ENCODE measurements at regions of chr19 and their contacts with region 1.

Region 1: GRCh38 chr19:35509861-35510625 is 3.4 kb downstream of the DMKN start:
- DNase-seq: peak; percentile 83
- ATAC-seq: peak; percentile 80
- H3K4me3 Mint-ChIP-seq: peak overlapping the region; percentile 45
- H3K27ac Mint-ChIP-seq: no peak overlapping the region
- H3K4me1 Mint-ChIP-seq: peaks cover 14% of the 10 kb centered on the region
- H3K27me3 Mint-ChIP-seq: peaks cover 35% of the 10 kb centered on the region
- CTCF ChIP-seq: peak; percentile 97

Region 2: DNA sequence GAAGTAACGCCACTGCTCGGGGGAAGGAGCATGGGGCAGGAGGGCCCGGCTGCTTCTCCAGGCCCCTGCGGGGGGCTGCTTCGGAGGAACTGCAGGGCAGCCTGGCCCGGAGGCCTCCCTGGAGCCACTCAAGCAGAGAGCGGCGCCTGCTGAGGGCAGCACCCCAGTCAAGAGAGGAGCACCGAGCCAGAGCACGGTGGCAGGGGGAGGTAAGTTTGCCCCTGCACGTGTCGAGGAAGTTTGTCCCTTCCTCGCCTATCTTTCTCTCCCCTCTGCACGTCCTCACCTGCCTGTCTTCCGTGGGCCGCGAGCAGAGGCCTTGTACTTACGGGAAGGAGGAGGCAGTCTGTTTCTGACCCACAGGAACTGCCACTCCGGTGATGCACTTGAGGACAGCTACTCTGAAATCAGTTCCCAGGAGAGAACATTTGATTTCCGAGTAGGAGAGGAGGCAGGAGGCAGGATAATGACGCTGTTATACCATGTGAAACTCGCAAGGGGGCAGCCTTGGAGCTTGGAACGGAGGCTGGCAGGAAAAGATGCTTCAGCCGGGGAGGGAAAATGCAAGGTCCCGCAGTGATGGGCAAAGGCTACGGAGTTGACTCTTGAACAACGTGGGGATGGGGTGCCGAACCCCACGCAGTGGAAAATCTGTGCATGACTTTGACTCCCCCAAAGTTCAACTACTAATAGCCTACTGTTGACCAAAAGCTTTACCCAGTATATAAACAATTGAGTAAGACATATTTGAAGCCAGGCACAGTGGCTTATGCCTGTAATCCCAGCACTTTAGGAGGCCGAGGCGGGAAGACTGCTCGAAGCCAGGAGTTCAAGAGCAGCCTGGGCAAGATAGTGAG is 157.4 kb before region 1 on chr19:
- CTCF ChIA-PET with region 1: interaction called, 11 read pairs
- POLR2A ChIA-PET with region 1: no interaction called
- intact Hi-C with region 1: no loop called
- DNase-seq: peak; percentile 82
- ATAC-seq: peak; percentile 87
- H3K4me3 Mint-ChIP-seq: no peak overlapping the region
- H3K27ac Mint-ChIP-seq: no peak overlapping the region
- H3K4me1 Mint-ChIP-seq: peaks cover 16% of the 10 kb centered on the region
- H3K27me3 Mint-ChIP-seq: peaks cover 2% of the 10 kb centered on the region
- CTCF ChIP-seq: peak; percentile 95

Region 3: GRCh38 chr19:35395382-35396199 is 114.5 kb before region 1 on chr19:
- CTCF ChIA-PET with region 1: no interaction called
- POLR2A ChIA-PET with region 1: no interaction called
- intact Hi-C with region 1: no loop called
- DNase-seq: no peak
- ATAC-seq: no peak
- H3K4me3 Mint-ChIP-seq: no peak overlapping the region
- H3K27ac Mint-ChIP-seq: no peak overlapping the region
- H3K4me1 Mint-ChIP-seq: no peaks in the 10 kb centered on the region
- H3K27me3 Mint-ChIP-seq: peaks cover 2% of the 10 kb centered on the region
- CTCF ChIP-seq: no peak

Region 4: DNA sequence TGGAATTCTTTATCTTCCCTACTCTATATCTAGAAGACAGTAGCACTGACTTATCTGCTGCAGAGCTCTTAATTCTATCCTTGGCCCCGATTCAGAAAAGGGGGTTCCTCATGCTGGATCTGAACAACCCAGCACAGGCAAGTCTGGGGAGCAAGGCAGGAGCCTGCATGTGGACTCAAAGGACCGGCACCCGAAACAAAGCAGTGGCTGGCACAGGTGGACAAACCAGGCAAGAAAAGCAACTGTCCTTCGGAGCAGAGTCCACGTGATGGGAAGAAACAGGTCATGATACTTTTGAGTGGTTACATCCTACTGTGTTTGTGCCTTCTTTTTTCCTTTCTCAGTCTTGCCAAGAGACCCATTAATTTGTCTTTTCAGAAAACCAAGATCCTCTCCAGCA is 100.9 kb before region 1 on chr19:
- CTCF ChIA-PET with region 1: no interaction called
- POLR2A ChIA-PET with region 1: no interaction called
- intact Hi-C with region 1: no loop called
- DNase-seq: no peak
- ATAC-seq: no peak
- H3K4me3 Mint-ChIP-seq: no peak overlapping the region
- H3K27ac Mint-ChIP-seq: no peak overlapping the region
- H3K4me1 Mint-ChIP-seq: peaks cover 7% of the 10 kb centered on the region
- H3K27me3 Mint-ChIP-seq: peaks cover 8% of the 10 kb centered on the region
- CTCF ChIP-seq: no peak

Region 5: GRCh38 chr19:35484252-35485036 is 25.6 kb before region 1 on chr19:
- CTCF ChIA-PET with region 1: interaction called, 10 read pairs
- POLR2A ChIA-PET with region 1: no interaction called
- intact Hi-C with region 1: no loop called
- DNase-seq: peak; percentile 24
- ATAC-seq: peak; percentile 79
- H3K4me3 Mint-ChIP-seq: no peak overlapping the region
- H3K27ac Mint-ChIP-seq: no peak overlapping the region
- H3K4me1 Mint-ChIP-seq: peaks cover 10% of the 10 kb centered on the region
- H3K27me3 Mint-ChIP-seq: peaks cover 6% of the 10 kb centered on the region
- CTCF ChIP-seq: no peak

Region 6: GRCh38 chr19:35549174-35549788 is 39.2 kb after region 1 on chr19:
- CTCF ChIA-PET with region 1: interaction called, 27 read pairs
- POLR2A ChIA-PET with region 1: no interaction called
- intact Hi-C with region 1: no loop called
- DNase-seq: peak; percentile 67
- ATAC-seq: no peak
- H3K4me3 Mint-ChIP-seq: no peak overlapping the region
- H3K27ac Mint-ChIP-seq: no peak overlapping the region
- H3K4me1 Mint-ChIP-seq: peaks cover 33% of the 10 kb centered on the region
- H3K27me3 Mint-ChIP-seq: no peaks in the 10 kb centered on the region
- CTCF ChIP-seq: peak; percentile 86

Region 7: DNA sequence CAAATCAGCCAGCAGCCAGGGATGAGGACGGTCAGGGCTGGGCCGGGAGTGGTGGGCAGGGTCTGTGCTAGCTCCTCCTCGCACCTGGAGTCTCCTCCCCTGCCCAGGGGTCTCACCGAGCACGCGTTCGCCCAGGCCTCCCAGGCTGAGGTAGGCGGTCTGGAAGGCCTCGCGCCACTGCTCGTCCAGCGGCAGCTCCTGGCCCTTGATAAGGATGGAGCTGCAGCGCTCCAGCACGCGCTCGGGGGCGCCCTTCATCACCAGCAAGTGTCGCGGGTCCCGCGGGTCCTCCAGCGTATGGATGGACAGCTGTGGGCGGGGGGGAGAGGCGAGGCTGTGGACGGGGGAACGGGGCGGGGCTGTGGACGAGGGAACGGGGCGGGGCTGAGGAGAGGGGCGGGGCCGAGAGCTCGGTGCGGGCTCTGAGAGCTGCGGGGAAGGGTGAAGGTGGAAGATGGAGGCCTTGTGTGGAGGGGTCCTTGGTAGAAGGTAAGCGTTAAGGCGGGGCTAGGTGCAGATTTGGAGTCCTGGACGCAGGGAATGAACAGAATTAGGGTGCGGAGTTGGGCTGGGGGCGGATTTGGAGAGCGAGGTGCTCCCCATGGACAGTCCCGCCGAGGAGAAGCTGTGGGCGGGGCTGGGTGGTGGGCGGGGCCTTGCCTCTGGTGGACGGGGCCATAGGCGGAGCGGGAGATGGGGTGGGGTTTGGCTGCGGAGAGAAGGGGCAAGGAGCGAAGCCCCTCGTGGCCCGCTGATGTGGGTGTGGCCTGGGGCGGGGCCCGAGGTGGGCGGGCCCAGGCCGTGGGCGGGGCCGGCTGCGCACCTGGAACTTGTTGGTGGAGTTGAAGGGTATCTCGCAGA is 47.7 kb after region 1 on chr19:
- CTCF ChIA-PET with region 1: interaction called, 10 read pairs
- POLR2A ChIA-PET with region 1: no interaction called
- intact Hi-C with region 1: no loop called
- DNase-seq: peak; percentile 71
- ATAC-seq: peak; percentile 74
- H3K4me3 Mint-ChIP-seq: peak overlapping the region; percentile 67
- H3K27ac Mint-ChIP-seq: no peak overlapping the region
- H3K4me1 Mint-ChIP-seq: peaks cover 8% of the 10 kb centered on the region
- H3K27me3 Mint-ChIP-seq: peaks cover 44% of the 10 kb centered on the region
- CTCF ChIP-seq: no peak

Region 8: GRCh38 chr19:35571406-35571967 is 61.4 kb after region 1 on chr19:
- CTCF ChIA-PET with region 1: no interaction called
- POLR2A ChIA-PET with region 1: no interaction called
- intact Hi-C with region 1: no loop called
- DNase-seq: no peak
- ATAC-seq: no peak
- H3K4me3 Mint-ChIP-seq: no peak overlapping the region
- H3K27ac Mint-ChIP-seq: no peak overlapping the region
- H3K4me1 Mint-ChIP-seq: no peaks in the 10 kb centered on the region
- H3K27me3 Mint-ChIP-seq: peaks cover 15% of the 10 kb centered on the region
- CTCF ChIP-seq: no peak

Region 9: DNA sequence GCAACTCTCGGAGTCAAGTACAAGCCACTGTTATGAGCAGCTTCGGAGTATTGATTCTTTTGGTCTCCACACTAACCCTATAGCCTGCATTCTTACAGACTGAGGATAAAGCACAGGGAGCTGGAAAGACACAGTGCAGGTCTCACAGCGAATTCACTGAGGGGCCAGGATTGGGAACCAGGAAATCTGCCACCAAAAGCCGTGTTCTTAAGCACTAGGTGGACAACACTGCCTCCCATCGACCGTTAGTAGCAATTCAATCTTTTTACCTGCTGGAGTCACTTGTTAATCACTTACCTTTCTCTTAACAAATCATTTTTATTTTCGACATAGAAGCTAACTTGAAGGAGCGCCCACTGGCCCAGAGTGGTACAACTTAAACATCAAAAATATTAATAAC is 82.2 kb after region 1 on chr19:
- CTCF ChIA-PET with region 1: interaction called, 14 read pairs
- POLR2A ChIA-PET with region 1: no interaction called
- intact Hi-C with region 1: loop called (anchors 2 kb)
- DNase-seq: peak; percentile 55
- ATAC-seq: peak; percentile 54
- H3K4me3 Mint-ChIP-seq: no peak overlapping the region
- H3K27ac Mint-ChIP-seq: no peak overlapping the region
- H3K4me1 Mint-ChIP-seq: peaks cover 5% of the 10 kb centered on the region
- H3K27me3 Mint-ChIP-seq: peaks cover 7% of the 10 kb centered on the region
- CTCF ChIP-seq: peak; percentile 73

Measured in activated CD8-positive, alpha-beta T cell treated with anti-CD3 and anti-CD28 coated beads for 36 hours (primary cell).